ENCODE measurements at regions of chr20 and their contacts with region 1.

Region 1: DNA sequence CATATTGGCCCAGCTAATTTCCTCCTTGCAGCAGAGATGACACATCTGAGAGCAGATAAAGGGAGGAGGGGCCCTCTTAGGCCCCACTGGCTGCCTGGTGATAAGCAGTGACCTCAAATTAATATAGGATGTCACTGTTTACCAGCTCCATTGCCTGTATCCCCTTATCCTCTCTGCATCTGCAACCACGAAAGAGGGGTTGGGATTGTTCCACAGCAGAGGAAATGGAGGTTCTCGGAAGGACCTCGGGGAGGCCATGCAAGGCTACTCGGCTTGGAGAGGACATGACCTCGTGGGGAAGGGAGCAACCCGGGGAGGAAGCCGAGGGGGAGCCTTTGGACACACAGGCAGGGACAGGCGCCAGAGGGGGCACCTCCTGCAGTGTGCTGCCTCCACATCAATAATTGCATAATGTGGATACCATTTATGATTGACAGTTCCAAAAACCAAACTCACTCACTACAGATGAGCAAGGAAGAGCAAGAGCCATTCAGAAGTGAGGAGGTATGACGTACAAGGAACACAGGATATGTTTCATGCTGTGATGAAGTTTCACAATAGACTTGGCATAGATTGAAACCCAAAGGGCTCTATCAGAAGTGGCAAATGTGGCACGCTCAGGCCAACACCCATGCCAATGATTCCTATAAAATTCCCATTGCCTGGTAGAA is 177.2 kb upstream of the RNF24 start:
- DNase-seq: peak; percentile 98
- H3K4me3 Mint-ChIP-seq: no peak overlapping the region
- H3K27ac Mint-ChIP-seq: no peak overlapping the region
- H3K4me1 Mint-ChIP-seq: peaks cover 37% of the 10 kb centered on the region
- H3K27me3 Mint-ChIP-seq: no peaks in the 10 kb centered on the region
- CTCF ChIP-seq: no peak

Region 2: DNA sequence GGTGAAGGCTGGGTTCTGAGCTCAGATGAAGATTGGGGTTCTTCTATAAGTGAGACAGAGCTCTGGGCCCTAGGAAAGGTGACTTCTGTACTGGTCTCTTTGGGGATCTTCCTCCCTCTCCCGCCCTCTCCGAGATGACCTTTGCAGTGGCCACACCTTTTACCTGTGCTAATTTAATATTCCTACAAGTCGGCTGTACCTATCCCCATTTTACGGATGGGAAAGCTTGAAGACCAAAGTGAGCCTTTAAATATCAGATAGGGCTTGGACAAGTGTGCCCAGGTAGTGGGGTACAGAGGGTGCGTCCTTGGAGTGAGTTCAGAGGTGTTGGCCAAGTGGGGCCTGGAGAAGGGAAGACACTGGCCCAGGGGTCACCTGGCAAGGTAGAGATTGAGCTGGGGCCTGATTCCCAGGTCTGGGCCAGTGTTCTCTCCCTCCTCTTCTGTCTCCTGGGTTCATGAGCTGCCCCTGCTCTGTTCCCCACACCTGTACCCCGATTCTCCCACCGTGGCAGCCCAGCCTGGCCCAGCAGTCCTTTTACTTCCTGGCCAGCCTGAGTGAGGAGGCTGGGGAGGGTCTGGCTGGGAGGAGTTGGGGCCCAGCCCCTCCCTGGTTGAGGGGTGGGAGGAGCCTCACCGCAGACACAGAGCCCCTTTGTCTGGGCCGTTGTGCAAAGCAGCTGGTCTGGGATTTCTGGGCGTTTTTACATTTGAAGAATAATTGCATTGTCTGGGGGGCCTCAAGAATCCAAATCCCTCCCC is 25.1 kb before region 1 on chr20:
- CTCF ChIA-PET with region 1: no interaction called
- POLR2A ChIA-PET with region 1: no interaction called
- intact Hi-C with region 1: no loop called
- DNase-seq: no peak
- H3K4me3 Mint-ChIP-seq: no peak overlapping the region
- H3K27ac Mint-ChIP-seq: peak overlapping the region; percentile 10
- H3K4me1 Mint-ChIP-seq: peaks cover 14% of the 10 kb centered on the region
- H3K27me3 Mint-ChIP-seq: no peaks in the 10 kb centered on the region
- CTCF ChIP-seq: no peak

Region 3: DNA sequence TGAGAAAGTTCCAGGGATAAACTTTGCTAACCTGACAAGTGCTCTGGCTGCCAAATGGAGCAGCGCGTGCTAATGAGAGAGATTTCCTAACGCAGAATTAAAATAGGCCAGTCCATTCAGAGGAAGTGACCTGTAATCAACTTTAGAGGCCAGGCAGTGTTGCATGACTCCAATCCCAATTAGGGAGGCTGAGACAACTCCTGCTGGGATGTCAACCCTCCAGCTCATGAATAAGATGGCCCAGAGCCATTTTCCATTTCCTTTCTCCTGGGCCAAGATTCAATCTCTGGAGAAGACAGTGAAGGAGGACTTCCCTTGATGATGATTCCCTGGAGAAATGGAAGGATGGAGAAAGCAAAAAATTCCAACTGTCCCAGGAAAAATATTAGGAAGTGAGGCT is 64.4 kb after region 1 on chr20:
- CTCF ChIA-PET with region 1: no interaction called
- POLR2A ChIA-PET with region 1: no interaction called
- intact Hi-C with region 1: no loop called
- DNase-seq: no peak
- H3K4me3 Mint-ChIP-seq: no peak overlapping the region
- H3K27ac Mint-ChIP-seq: no peak overlapping the region
- H3K4me1 Mint-ChIP-seq: peaks cover 6% of the 10 kb centered on the region
- H3K27me3 Mint-ChIP-seq: no peaks in the 10 kb centered on the region
- CTCF ChIP-seq: no peak

Region 4: DNA sequence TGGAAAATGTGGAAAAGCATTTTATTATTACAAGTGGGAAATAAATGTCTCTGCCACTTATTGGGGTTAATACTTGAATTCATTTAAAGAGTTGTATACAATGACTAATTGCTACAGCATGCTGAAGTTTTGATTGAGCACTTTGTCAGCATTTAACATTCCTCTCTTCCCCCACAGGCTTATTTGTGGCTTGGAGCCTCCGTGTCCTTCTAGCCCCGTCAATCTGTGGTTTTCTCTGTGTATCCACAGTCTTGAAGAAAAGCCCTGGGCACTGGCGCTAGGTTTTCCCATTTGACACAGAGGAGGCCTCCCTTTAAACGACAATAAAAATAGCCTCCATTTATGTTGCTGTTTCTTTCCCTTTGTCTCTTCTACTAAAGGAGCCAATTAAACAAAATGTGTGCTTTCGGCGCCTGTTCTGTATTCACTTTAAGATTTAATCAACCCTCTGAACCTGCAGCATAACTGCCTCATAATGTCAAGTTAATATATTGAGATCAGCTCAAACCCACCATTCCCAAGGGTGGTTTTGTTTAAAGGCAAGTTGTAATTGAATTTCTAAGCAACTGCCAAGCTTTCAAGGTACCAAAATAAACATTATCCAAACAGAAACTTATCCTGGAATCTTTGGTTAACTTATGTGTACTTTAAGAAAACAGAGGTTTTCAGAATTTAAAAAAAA is 149.4 kb after region 1 on chr20:
- CTCF ChIA-PET with region 1: no interaction called
- POLR2A ChIA-PET with region 1: no interaction called
- intact Hi-C with region 1: no loop called
- DNase-seq: peak; percentile 21
- H3K4me3 Mint-ChIP-seq: no peak overlapping the region
- H3K27ac Mint-ChIP-seq: no peak overlapping the region
- H3K4me1 Mint-ChIP-seq: peaks cover 16% of the 10 kb centered on the region
- H3K27me3 Mint-ChIP-seq: no peaks in the 10 kb centered on the region
- CTCF ChIP-seq: no peak

Region 5: DNA sequence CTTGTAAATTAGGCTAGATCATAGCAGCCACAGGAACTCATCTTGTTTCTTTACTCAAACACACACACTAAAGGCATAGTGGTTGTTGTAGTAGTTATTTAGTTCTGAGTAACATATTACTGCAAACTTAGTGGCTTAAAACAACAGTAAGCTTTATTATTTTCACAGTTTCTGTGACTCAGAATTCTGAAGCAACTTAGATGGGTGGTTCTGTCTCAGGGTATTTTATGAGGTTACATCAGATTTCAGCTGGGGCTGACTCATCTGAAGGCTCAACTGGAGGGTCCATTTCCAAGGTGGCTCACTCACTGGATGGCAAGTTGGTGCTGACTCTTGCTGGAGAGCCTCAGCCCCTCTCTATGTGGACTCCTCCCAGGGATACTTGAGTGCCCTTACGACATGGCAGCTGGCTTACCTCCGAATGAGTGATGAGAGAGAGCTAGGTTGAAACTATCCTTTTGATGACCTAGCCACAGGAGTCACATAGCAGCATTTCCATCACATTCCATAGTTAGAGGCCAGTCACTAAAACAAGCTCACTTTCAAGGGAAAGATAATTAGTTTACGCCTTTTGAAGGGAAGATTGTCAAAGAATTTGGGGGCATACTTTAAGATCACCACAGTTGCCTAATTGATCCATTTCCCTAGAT is 392.7 kb after region 1 on chr20:
- CTCF ChIA-PET with region 1: interaction called, 4 read pairs
- POLR2A ChIA-PET with region 1: no interaction called
- intact Hi-C with region 1: loop called (anchors 5 kb)
- DNase-seq: peak; percentile 76
- H3K4me3 Mint-ChIP-seq: no peak overlapping the region
- H3K27ac Mint-ChIP-seq: peak overlapping the region; percentile 18
- H3K4me1 Mint-ChIP-seq: peaks cover 4% of the 10 kb centered on the region
- H3K27me3 Mint-ChIP-seq: no peaks in the 10 kb centered on the region
- CTCF ChIP-seq: no peak